PC-3 (cell line): ENCODE measurements at regions of chr9 and their contacts with region 1.

Region 1: DNA sequence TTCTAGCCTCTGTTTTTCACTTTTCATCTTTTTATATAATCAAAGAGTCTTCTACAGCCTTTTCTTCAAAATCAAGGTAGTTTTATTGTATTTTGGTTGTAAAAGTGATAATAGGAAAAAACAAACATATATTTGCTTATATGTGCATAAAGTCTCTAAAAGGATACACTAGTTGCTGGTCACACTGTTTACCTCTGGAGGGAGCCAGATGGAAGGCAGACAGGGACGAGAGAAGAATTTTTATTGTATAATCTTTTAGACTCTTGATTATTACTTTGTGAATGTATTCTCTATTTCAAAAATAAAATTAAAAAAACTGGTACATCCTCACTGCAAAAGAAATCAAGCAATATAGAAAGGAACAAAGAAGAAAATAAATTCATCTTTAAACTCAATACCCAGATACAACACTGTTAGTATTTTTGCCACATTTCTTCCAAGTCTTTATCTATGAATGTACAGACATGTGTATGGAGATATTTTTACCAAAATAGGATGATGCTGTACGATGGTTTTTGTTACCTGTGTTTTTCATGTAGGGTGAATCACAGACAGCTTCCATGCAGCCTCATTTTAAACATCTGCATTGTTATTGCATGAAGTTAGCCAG is 6.1 kb upstream of the RNF183 start:
- DNase-seq: peak; percentile 55
- ATAC-seq: peak; percentile 64
- H3K4me3 ChIP-seq: no peak overlapping the region
- H3K27ac ChIP-seq: no peak overlapping the region
- H3K4me1 ChIP-seq: no peaks in the 10 kb centered on the region
- H3K27me3 ChIP-seq: no peaks in the 10 kb centered on the region
- CTCF ChIP-seq: peak; percentile 77

Region 2: DNA sequence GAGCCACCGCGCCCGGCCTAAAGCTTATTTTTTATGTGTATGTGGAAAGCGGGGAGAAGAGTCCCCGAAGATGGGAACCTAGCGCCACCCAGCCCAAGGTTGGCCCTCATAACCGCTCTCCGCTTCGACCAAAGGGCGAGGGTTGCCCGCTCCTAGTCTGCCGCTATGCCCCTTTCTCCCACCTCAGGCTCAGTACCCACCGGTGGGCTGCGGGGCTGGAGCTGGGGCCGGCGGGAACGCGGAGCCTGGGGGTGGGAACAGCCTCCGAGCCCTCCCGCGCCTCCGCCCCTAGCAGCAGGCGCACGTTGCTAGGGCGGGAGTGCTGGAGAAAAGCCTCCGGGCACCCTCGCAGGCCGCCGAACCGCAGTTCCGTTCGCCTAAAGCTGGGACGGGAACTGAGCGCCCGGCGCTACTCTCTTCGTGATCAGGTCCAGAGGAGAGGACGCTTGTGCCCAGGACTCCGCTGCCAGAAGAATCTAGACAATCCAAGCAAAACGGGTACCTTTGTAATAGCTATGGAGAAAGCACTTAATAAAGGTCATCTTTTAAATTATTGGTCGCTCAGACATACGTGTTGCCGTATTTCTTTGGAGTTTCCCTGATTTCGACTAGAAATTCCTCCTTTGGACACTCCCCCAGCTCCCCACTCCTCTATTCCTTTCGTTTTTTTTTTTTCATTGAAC is 30.8 kb after region 1 on chr9 and contains the start of gene WDR31:
- CTCF ChIA-PET with region 1: no interaction called
- POLR2A ChIA-PET with region 1: no interaction called
- intact Hi-C with region 1: loop called (anchors 2 kb)
- DNase-seq: peak; percentile 79
- ATAC-seq: peak; percentile 87
- H3K4me3 ChIP-seq: peak within 1 kb of the TSS; percentile 91
- H3K27ac ChIP-seq: peak within 1 kb of the TSS; percentile 63
- H3K4me1 ChIP-seq: peaks cover 25% of the 10 kb centered on the region
- H3K27me3 ChIP-seq: no peaks in the 10 kb centered on the region
- CTCF ChIP-seq: no peak
- total RNA-seq, gene WDR31: 1.7 TPM in 2 replicates

Region 3: DNA sequence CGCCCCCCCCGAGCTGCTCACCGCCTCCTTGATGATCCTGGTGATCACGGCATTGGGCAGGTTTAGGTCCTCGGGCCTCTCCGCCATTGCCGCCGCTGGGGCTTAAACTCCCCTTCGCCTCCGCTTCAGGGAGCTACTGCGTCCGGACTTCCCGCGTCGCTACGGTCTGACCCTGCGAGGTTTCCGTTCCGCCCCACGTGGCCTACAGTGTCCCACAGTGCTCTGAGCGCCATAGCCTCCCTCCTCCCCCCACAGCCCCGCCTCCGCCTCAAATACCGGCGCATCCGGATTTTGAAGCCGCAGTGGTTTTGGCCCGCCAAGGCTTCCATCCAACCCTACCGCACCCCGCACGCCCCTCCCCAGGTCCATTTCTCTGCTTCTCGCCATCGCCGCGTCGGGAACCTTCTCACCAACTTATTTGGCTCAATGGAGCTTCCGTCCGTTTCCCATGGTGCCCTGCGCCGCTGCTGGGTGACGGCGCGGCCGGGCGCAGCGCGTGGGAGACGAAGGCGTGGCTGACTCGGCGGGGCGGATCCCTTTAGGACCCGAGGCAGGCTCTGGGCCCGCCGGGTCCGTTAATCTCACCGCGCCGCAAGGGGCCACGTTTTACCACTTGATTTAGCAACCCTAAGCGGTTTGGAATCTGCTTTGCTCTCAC is 101.0 kb after region 1 on chr9 and contains the starts of genes C9orf43 and POLE3:
- CTCF ChIA-PET with region 1: no interaction called
- POLR2A ChIA-PET with region 1: no interaction called
- intact Hi-C with region 1: loop called (anchors 1 kb)
- DNase-seq: peak; percentile 90
- ATAC-seq: peak; percentile 94
- H3K4me3 ChIP-seq: peak within 1 kb of the TSS; percentile 99
- H3K27ac ChIP-seq: peak within 1 kb of the TSS; percentile 96
- H3K4me1 ChIP-seq: peaks cover 17% of the 10 kb centered on the region
- H3K27me3 ChIP-seq: no peaks in the 10 kb centered on the region
- CTCF ChIP-seq: no peak
- total RNA-seq, gene C9orf43: 0.29 and 0.52 TPM in 2 replicates
- total RNA-seq, gene POLE3: 83.4 and 84.7 TPM in 2 replicates